Left ventricle myocardium superior (tissue), 1 donor: ENCODE measurements at regions of chr1 and their contacts with region 1.

Region 1: DNA sequence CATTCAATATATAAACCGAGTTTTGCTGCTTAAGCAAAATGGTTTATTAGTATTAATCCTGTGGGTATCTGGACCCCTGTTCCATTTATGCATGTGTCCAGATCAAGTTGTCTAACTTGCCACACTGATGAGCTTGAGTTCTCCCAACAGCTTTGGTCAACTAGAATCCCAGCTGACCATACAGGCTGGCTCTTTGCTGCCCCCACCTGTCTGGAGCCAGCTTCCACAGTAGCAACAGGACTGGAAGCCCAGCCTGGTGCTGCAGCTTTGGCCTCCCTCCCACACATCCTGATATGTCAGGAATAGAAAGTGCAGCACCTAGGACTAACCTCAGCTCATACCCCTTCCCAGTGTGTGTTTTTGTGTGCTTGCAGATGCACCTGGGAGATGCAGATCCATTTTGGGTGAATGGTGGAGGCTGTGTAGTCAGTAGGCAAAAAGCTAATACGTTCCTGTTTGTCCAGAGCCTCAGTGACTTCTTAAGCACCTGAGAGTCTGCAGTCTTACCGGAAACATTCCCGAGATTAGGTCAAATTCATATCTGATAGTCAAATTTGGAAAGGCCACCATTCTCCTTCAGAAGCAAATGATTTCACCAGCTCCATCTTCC is 40.9 kb upstream of the BEND5 start:
- DNase-seq: peak; percentile 67
- ATAC-seq: peak; percentile 81

Region 2: GRCh38 chr1:48677306-48678287 is 140.0 kb before region 1 on chr1:
- intact Hi-C with region 1: loop called (anchors 5 kb)
- DNase-seq: peak; percentile 80
- ATAC-seq: peak; percentile 83

Region 3: DNA sequence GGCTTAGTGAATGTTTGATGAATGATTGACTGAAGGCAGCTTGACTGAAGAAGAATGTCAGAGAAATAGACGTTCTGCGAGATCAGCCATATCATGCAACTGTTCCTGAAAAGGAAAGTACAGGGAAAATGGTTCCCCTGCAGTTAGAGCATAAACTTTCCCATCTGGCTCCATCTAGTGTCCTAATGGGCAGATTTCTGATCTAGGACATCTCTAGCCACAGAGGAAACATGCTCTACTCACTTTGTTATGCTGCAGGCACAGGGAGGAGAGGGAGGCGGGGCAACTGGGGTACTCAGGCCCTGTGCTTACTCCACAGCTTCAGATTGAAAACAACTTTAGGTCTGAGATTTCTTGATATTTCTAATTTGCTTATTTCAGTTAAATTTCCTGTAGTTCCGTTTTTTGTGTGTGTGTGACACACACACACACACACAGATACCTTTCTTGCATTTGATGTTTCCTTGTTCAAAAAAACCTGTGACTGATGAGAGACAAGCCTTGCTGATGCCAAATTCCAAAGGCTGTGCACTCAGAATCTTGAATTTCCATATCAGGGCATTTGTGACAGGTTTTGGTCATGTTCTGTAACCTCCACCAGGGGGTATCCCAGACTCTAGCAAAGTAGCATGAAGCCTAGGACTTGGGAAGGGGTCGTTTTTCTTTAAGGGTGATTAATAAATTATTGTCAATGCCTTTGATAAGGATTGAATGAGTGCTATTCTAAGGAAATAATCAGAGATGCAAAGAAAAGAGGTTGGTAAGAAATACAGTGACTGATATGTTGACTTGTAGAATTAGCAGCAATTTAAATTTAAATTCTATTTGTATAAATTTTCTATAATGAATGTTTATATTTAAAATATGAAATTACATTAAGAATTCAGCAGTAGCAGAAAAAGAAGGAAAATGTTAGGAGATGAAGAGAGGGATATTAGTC is 98.8 kb after region 1 on chr1:
- intact Hi-C with region 1: no loop called
- DNase-seq: peak; percentile 25
- ATAC-seq: peak; percentile 13